Psoas muscle (tissue), 8 donors: ENCODE measurements at regions of chr19 and their contacts with region 1.

Region 1: DNA sequence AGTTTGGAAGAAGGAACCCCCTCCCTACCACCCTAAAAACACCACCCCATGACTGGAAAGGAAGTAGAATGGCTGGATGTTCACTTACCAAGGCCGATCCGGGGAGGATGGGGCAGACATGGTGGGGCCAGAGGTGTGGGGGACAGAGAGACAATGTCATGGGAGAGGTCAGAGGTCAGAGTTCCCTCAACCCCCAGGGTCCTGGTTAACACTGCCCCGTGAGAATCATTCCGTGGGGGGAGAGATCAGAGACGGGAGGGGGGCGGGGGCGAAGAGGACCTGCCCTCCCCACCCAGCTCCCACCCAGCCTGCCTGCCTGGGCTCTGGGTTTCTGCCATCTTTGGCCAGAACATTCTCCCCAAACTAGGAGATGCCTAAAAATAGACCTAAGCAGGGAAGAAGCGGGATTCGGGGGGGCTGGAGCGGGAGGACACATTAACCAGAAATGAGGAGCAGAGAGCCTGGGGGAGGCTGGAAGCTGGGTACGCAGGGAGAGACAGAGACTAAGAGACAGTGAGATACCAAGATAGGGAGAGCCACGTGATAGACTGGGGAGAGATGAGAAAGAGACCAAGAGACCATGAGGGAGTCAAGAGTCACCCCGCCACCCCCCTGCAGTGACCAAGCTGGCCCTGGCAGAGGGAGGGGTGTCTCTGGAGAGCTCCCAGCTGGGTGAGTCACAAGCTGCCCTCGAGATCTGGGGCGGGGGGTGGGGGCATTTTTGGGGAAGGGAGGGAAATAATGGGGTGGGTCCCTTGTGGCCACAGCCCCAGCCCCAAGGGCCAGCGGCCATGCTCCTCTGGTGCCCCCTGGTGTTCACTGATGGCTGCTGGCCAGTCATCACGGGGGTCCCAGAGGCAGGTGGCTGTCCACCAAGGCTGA is 6.1 kb upstream of the KANK2 start:
- DNase-seq: peak; percentile 77 to 80
- ATAC-seq: peak; percentile 66 to 82 (median 75)
- H3K4me3 ChIP-seq: peak overlapping the region; percentile 42
- H3K27ac ChIP-seq: peak overlapping the region; percentile 67
- H3K4me1 ChIP-seq: peaks cover 4% of the 10 kb centered on the region
- H3K27me3 ChIP-seq: no peaks in the 10 kb centered on the region
- CTCF ChIP-seq: peak; percentile 86

Region 2: GRCh38 chr19:11137542-11138384 is 65.7 kb before region 1 on chr19:
- intact Hi-C with region 1: loop called (anchors 1 to 2 kb)
- DNase-seq: peak; percentile 83 to 89
- ATAC-seq: peak; percentile 56 to 72 (median 60)
- H3K4me3 ChIP-seq: peak overlapping the region; percentile 45
- H3K27ac ChIP-seq: peak overlapping the region; percentile 68
- H3K4me1 ChIP-seq: peaks cover 33% of the 10 kb centered on the region
- H3K27me3 ChIP-seq: no peaks in the 10 kb centered on the region
- CTCF ChIP-seq: peak; percentile 78

Region 3: DNA sequence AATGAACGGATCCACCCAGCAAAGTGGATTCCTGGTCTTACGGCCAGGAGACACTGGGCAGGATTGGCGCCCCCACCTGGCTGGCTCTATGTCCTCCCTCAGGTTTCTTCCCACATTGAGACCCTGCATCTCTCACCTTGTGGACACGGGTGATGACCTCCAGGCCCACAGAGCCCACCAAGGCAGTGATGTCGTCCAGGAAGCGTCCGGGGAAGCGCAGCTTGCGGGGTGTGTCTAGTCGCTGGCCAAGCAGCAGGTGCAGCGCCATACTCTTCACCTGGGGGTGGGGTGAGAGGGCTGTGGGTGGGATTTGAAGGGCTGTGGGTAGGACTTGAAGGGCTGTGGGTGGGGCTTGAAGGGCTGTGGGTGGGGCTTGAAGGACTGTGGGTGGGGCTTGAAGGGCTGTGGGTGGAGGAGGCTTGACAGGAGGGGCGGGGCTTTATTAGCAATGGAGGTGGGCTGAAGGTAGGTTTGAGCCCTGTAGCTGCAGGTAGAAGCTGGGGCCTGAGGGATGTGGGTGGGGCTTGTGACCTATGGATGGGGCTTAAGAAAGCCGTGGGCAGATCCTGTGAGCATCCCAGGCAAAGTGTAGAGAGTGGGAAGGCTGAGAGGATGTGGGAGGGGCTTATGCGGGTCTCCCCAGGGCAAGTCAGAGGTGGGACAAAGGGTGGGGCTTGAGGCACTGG is 23.9 kb after region 1 on chr19:
- intact Hi-C with region 1: no loop called
- DNase-seq: no peak
- ATAC-seq: no peak
- H3K4me3 ChIP-seq: no peak overlapping the region
- H3K27ac ChIP-seq: no peak overlapping the region
- H3K4me1 ChIP-seq: no peaks in the 10 kb centered on the region
- H3K27me3 ChIP-seq: no peaks in the 10 kb centered on the region
- CTCF ChIP-seq: no peak